Caco-2 (cell line): ENCODE measurements at regions of chr7 and their contacts with region 1.

Region 1: DNA sequence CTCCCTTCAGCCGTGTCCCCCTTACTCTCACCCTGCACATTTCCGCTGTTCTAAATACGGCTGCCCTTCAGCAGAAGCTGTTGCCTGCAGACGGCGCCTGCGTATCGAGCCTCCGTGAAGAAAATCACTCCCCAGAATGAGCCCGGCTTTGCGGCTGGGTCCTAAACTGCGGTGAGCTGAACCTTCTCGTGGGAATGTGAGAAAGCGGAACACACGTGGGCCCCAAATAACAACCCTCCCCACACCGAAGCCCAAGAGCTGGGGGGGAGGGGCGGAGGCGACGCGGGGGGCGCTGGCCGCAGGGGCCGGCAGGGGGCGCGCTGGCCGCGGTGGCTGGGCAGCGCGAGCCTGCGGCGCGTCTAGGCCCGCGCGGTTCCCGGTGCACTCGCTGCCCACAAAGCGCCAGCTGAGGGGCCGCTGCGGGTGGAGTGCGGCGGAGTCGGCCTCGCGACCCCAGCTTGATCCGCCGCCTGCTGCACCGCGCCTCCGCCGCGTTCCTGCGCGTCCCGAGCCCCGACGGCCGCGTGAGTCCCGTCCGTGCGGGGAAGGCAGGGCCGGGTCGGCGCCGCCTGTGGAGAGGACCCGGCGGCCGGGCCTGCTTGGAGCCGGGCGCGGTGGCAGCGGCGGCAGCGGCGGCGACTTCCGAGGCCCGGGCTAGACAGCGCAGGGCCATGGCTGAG is at the start of gene ZNF398:
- DNase-seq: peak; percentile 73 to 85
- H3K4me3 ChIP-seq: peak within 1 kb of the TSS; percentile 97
- H3K4me3 Mint-ChIP-seq: peak within 1 kb of the TSS; percentile 97
- H3K27ac Mint-ChIP-seq: peak within 1 kb of the TSS; percentile 79
- H3K4me1 ChIP-seq: peaks cover 10% of the 10 kb centered on the region
- H3K4me1 Mint-ChIP-seq: peaks cover 28% of the 10 kb centered on the region
- H3K27me3 ChIP-seq: no peaks in the 10 kb centered on the region
- H3K27me3 Mint-ChIP-seq: no peaks in the 10 kb centered on the region
- CTCF ChIP-seq: peak; percentile 47 to 72
- total RNA-seq, gene ZNF398: 13.0 and 13.4 TPM in 2 replicates

Region 2: DNA sequence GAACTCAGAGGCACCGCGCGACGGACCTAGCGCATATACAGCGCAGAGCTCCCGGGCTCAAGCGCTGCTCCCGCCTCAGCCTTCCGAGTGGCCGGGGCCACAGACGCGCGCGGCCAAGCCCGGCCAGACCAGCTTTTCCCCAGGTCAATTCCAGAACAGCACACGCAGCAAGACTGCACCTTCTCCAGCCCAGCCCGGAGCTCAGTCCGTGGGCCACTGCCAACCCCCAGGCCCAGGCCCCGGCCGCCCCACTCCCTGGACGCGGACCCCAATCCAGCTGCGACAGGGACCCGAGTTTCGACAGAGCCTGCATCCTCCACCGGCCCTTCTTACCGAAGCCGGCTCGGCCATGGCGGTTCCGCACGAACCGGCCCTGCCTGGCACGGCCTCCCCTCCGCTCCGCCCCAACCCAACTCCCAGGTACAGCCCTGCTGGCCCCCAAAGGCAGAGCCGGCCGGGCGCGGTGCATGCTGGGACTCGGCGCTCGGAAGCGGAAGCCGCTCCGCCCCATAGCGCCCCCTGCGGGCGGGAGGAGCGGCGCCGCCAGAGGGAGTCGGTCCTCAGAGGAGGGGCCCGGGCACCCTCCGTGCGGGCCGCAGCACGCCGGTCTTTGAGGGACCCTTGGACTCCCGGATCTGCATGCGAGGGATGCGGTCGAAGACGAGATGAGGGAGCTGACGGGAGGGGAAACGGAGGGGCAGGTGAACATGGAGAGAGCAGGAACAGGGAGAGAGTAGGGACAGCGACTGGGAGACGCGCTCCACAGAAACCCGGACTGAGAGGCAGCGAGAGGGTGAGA is 21.1 kb before region 1 on chr7 and contains the start of gene ZNF425:
- CTCF ChIA-PET with region 1: interaction called, 17 read pairs
- POLR2A ChIA-PET with region 1: interaction called, 12 read pairs
- intact Hi-C with region 1: loop called (anchors 1 kb)
- DNase-seq: peak; percentile 93 to 97
- H3K4me3 ChIP-seq: peak within 1 kb of the TSS; percentile 74
- H3K4me3 Mint-ChIP-seq: peak within 1 kb of the TSS; percentile 75
- H3K27ac Mint-ChIP-seq: peak within 1 kb of the TSS; percentile 84
- H3K4me1 ChIP-seq: peaks cover 7% of the 10 kb centered on the region; the same call in 1 of the 2 replicates
- H3K4me1 Mint-ChIP-seq: peaks cover 11% of the 10 kb centered on the region
- H3K27me3 ChIP-seq: no peaks in the 10 kb centered on the region
- H3K27me3 Mint-ChIP-seq: no peaks in the 10 kb centered on the region
- CTCF ChIP-seq: peak; percentile 94
- total RNA-seq, gene ZNF425: 2.6 and 4.0 TPM in 2 replicates

Region 3: DNA sequence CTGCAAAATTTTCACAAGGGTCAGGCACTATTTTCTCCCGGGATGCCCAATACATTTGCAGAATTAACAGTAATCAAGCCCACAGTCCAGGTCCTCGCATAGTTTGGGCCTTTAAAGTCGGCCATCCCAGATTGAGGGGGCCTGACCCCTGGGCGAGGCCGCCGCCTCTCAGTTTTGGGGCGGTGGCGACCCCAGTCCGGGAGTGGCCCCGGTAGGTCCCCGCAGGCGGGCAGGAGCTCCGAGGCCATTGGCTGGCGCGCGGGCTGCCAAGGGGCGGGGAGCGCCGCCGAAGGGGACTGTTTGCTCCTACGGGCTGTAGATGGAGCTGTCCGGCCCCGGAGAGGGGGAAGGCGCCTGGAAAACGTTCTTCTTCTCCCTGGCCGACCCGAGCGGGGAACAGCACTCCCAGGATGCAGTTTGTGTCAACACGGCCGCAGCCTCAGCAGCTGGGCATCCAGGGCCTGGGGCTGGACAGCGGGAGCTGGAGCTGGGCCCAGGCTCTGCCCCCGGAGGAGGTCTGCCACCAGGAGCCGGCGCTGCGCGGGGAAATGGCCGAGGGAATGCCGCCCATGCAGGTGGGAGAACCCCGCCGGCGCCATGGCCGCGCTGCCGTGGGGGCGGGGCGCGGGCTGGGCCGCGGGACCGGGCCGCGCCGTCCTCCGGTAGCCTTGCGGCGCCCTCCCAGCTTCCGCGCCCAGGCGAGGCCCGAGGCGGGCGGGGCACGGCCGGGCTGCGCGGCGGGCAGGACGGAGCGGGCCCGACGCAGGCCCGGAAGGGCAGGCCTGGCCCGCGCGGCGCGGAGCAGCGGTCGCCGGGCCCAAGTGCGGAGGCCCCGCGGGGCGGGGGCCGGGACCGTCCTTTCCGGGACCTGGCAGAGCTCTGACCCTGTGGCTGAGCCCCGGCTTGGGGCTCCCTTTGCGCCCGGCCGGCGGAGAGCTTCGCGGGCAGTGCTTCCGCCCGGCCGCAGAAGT is 48.3 kb after region 1 on chr7 and contains the start of gene ZNF282:
- CTCF ChIA-PET with region 1: interaction called, 20 read pairs
- POLR2A ChIA-PET with region 1: interaction called, 6 read pairs
- intact Hi-C with region 1: loop called (anchors 2 kb)
- DNase-seq: peak; percentile 94 to 96
- H3K4me3 ChIP-seq: peak within 1 kb of the TSS; percentile 94
- H3K4me3 Mint-ChIP-seq: peak within 1 kb of the TSS; percentile 85
- H3K27ac Mint-ChIP-seq: peak within 1 kb of the TSS; percentile 87
- H3K4me1 ChIP-seq: no peaks in the 10 kb centered on the region; the same call in 1 of the 2 replicates
- H3K4me1 Mint-ChIP-seq: no peaks in the 10 kb centered on the region
- H3K27me3 ChIP-seq: no peaks in the 10 kb centered on the region
- H3K27me3 Mint-ChIP-seq: no peaks in the 10 kb centered on the region
- CTCF ChIP-seq: peak; percentile 49 to 82
- total RNA-seq, gene ZNF282: 35.7 and 44.0 TPM in 2 replicates